ENCODE measurements at regions of chr14 and their contacts with region 1.

Region 1: DNA sequence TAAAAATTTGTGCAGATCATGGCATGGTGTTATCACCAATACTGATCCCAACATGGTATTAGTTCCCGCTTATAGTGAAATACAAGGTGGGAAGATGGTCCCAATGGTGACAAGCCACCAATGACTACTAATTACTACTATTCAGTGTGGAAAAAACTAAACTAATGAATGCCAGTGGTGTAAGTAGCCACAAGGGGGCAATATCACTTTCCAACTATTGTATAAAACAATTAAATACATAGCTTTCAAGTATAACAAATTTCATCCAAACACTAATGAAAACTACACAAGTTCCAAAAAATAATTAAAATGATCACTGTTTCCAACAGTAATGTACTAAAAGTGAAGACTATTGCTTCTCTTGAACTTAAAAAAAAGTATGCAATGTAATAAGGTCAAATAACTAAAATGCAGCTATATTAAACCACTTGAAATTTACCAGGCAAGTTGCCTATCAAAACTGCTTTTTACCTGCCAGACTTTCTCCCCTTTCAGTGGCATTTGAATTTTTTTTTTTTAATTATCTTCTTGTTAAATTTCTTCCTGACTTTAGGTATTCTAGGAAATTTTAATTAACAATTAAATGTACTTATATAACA is 58.0 kb downstream of the PAPLN start:
- H3K4me3 ChIP-seq: no peak overlapping the region
- H3K27ac ChIP-seq: no peak overlapping the region
- H3K4me1 ChIP-seq: no peaks in the 10 kb centered on the region
- CTCF ChIP-seq: no peak

Region 2: GRCh38 chr14:73283608-73284379 is 11.5 kb before region 1 on chr14:
- CTCF ChIA-PET with region 1: interaction called, 10 read pairs
- POLR2A ChIA-PET with region 1: no interaction called
- H3K4me3 ChIP-seq: no peak overlapping the region
- H3K27ac ChIP-seq: peak overlapping the region; percentile 30; the same call in 1 of the 2 replicates
- H3K4me1 ChIP-seq: no peaks in the 10 kb centered on the region
- CTCF ChIP-seq: no peak

Region 3: DNA sequence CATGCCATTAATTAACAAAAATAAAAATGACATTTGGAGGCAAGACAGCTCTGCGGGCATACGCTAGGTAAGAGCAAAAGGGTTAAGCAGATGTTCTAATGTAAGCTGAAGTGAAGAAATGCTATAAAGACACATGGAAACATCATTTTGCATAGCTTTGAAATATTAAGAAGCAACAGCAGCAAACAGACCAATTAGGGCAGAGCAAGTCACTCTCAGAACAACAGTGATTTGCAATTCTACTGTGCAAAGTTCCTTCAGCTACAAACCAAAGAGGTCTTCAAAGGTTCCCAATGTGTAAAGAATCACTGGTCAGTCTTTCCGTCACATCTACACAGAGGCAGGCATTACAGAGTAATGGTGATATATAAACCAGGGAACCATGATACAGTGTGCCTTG is 10.2 kb after region 1 on chr14:
- CTCF ChIA-PET with region 1: interaction called, 20 read pairs
- POLR2A ChIA-PET with region 1: no interaction called
- H3K4me3 ChIP-seq: no peak overlapping the region
- H3K27ac ChIP-seq: no peak overlapping the region
- H3K4me1 ChIP-seq: no peaks in the 10 kb centered on the region
- CTCF ChIP-seq: no peak

Region 4: DNA sequence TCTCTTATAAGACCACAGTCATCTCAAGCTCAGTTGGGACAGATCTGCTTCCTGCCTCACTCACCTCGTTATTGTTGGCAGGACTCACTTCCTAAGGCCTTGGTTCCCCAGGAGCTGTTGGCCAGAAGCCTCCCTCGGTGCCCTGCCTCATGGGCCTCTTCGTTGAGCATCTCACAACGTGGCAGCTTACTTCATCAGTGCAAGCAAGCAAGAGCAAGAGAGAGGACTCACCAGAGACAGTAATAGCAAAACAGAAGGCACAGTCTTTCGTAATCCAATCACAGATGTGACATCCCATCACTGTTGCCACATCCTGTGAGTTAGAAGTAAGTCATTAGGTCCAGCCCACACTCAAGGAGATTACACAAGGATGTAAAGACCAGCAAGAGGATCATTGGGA is 168.1 kb after region 1 on chr14:
- CTCF ChIA-PET with region 1: interaction called, 85 read pairs
- POLR2A ChIA-PET with region 1: no interaction called
- H3K4me3 ChIP-seq: no peak overlapping the region
- H3K27ac ChIP-seq: no peak overlapping the region
- H3K4me1 ChIP-seq: peaks cover 26% of the 10 kb centered on the region
- CTCF ChIP-seq: no peak

Region 5: GRCh38 chr14:73472185-73473114 is 177.2 kb after region 1 on chr14:
- CTCF ChIA-PET with region 1: interaction called, 85 read pairs
- POLR2A ChIA-PET with region 1: no interaction called
- H3K4me3 ChIP-seq: no peak overlapping the region
- H3K27ac ChIP-seq: no peak overlapping the region
- H3K4me1 ChIP-seq: no peaks in the 10 kb centered on the region
- CTCF ChIP-seq: peak; percentile 31; the same call in 1 of the 2 replicates

Region 6: DNA sequence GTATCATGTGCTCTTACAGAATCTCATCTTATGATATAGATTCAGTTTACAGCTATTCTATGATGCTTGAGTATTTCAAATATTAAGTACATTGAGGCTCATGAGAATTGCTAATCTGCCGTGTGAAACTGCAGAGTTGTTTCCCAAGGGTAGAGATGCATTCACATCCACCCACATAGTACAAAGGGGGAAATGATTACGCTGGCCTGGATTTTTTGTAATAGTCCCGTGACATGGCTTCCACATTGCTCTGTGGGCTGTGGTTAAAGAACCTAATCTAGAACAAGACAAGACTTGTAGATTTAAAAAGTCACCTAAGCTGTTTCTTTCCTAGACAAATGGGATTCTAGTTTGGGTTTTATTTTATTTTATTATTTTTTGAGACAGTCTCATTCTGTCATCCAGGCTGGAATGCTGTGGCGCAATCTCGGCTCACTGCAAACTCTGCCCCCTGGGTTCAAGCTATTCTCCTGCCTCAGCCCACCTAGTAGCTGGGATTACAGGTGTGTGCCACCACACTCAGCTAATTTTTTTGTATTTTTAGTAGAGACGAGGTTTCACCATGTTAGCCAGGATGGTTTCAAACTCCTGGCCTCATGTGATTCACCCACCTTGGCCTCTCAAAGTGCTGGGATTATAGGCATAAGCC is 182.4 kb after region 1 on chr14:
- CTCF ChIA-PET with region 1: interaction called, 85 read pairs
- POLR2A ChIA-PET with region 1: no interaction called
- H3K4me3 ChIP-seq: no peak overlapping the region
- H3K27ac ChIP-seq: no peak overlapping the region
- H3K4me1 ChIP-seq: no peaks in the 10 kb centered on the region
- CTCF ChIP-seq: no peak

Region 7: DNA sequence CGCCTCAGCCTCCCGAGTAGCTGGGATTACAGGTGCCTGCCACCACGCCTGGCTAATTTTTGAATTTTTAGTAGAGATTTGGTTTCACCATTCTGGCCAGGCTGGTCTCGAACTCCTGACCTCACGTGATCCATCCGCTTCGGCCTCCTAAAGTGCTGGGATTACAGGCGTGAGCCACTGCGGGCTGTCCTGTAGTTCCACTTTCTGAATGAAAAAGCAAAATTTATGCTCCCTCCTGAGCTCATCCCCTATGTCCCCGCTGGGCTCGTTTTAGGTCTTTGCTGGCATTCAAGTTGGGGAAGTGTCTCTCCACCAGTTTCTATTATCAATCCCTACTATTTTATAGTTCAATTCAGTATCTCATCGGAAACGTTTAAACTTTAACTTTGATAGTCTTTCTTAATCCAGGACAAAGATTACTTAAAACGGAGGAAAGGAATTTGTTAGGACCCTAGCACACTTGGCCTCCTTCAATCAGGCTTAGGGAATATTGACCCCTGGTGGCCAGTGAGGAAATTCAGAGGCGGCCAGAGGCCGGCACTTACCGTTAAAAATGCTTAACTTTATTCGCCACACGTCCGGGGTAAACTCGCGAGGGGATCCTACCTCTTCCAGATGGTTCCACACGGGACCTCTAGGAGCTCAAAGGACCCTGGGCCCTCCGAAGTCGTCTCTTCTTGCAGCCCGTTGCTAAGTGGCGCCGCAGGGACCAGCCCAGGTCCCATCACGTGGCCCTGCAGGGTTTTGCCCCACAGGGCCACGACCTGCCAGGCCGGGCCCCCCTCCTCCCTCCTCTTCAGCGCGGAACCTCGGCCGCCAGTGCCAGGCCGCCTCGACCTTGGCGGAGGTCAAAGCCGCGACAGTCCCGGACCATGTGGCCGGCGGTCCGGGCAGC is 338.1 kb after region 1 on chr14:
- CTCF ChIA-PET with region 1: interaction called, 10 read pairs
- POLR2A ChIA-PET with region 1: no interaction called
- H3K4me3 ChIP-seq: peak overlapping the region; percentile 28
- H3K27ac ChIP-seq: peak overlapping the region; percentile 56; the same call in 1 of the 2 replicates
- H3K4me1 ChIP-seq: no peaks in the 10 kb centered on the region
- CTCF ChIP-seq: peak; percentile 19; the same call in 1 of the 2 replicates